Tibial artery (tissue), 4 donors: ENCODE measurements at regions of chr5 and their contacts with region 1.

Region 1: GRCh38 chr5:55936100-55936693 is 58.6 kb downstream of the IL6ST start:
- DNase-seq: peak; percentile 77 to 82
- H3K4me3 ChIP-seq: no peak overlapping the region
- H3K27ac ChIP-seq: no peak overlapping the region
- H3K4me1 ChIP-seq: no peaks in the 10 kb centered on the region
- H3K27me3 ChIP-seq: no peaks in the 10 kb centered on the region
- CTCF ChIP-seq: peak; percentile 64 to 77

Region 2: GRCh38 chr5:55254802-55255201 is 681.4 kb before region 1 on chr5:
- intact Hi-C with region 1: loop called (anchors 10 kb)
- DNase-seq: no peak
- H3K4me3 ChIP-seq: no peak overlapping the region
- H3K27ac ChIP-seq: no peak overlapping the region
- H3K4me1 ChIP-seq: no peaks in the 10 kb centered on the region
- H3K27me3 ChIP-seq: no peaks in the 10 kb centered on the region
- CTCF ChIP-seq: no peak

Region 3: GRCh38 chr5:56200856-56201666 is 264.9 kb after region 1 on chr5:
- intact Hi-C with region 1: loop called (anchors 10 kb)
- DNase-seq: peak in 1 of 2 donors; percentile 37
- H3K4me3 ChIP-seq: no peak overlapping the region
- H3K27ac ChIP-seq: no peak overlapping the region
- H3K4me1 ChIP-seq: peaks cover 0 to 7% (median 0%) of the 10 kb centered on the region in 4 donors
- H3K27me3 ChIP-seq: no peaks in the 10 kb centered on the region
- CTCF ChIP-seq: peak; percentile 63 to 66

Region 4: DNA sequence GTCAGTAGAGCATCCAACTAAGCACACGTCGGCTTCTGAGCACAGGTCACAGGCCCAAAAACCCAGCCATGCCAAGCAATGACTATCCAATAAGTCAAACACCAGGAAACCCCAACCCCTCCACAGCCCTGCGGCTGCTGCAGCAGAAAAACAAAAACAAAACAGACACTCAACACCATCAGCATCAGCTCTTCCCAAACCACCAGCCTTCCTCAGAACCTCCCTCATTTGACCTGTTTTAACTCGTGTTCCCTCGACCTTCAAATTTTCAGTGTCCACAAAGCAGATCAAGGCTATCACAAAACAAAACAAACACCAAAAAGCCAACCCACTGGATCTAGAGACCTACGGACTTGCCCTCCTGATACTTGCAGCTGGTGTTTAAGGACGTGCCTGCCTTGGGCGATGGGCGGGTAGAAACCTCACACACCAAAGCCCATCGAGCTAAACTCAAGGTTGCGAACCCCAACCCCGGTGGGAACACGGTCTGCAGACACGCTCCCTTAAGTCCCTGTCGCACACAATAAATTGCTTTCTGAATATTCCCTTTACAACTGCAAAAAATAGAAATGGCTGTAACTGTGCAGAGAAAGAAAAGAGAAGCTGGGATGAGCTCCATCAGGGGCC is 544.0 kb after region 1 on chr5:
- intact Hi-C with region 1: no loop called
- DNase-seq: no peak
- H3K4me3 ChIP-seq: peak overlapping the region; percentile 66 to 94
- H3K27ac ChIP-seq: peak overlapping the region; percentile 89 to 96
- H3K4me1 ChIP-seq: peaks cover 0 to 43% (median 14%) of the 10 kb centered on the region in 4 donors
- H3K27me3 ChIP-seq: no peaks in the 10 kb centered on the region
- CTCF ChIP-seq: no peak